Activated B cell treated with CpG ODN at 0.5 μM for 24 hours (primary cell): ENCODE measurements at regions of chr9 and their contacts with region 1.

Region 1: GRCh38 chr9:33139421-33140228 is 27.5 kb downstream of the B4GALT1 start:
- DNase-seq: peak; percentile 17
- ATAC-seq: no peak
- H3K4me3 Mint-ChIP-seq: peak overlapping the region; percentile 75
- H3K27ac Mint-ChIP-seq: peak overlapping the region; percentile 97
- H3K4me1 Mint-ChIP-seq: peaks cover 98% of the 10 kb centered on the region
- H3K27me3 Mint-ChIP-seq: no peaks in the 10 kb centered on the region
- CTCF ChIP-seq: no peak

Region 2: DNA sequence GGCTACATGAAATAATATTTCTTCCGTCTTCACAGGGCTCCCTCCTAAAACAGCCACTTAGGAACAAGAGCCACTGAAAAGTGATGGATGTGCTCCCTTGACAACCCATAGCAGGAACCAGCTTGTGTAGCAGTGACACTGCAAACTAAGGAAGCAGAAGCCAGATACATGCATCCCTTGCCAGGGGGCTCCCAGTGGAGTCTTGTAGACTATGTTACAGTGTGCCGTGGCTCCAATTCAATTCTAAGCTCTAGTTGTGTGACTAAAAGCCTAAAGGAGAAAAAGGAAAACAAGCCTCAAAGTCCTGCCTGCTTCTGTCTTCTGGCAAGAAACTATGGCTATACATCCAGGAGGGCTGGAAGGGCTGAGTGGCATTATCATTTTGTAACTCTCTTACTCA is 492.0 kb before region 1 on chr9:
- CTCF ChIA-PET with region 1: no interaction called
- POLR2A ChIA-PET with region 1: no interaction called
- intact Hi-C with region 1: no loop called
- DNase-seq: no peak
- ATAC-seq: no peak
- H3K4me3 Mint-ChIP-seq: no peak overlapping the region
- H3K27ac Mint-ChIP-seq: no peak overlapping the region
- H3K4me1 Mint-ChIP-seq: no peaks in the 10 kb centered on the region
- H3K27me3 Mint-ChIP-seq: peaks cover 20% of the 10 kb centered on the region
- CTCF ChIP-seq: no peak

Region 3: GRCh38 chr9:33116860-33117259 is 22.8 kb before region 1 on chr9:
- CTCF ChIA-PET with region 1: no interaction called
- POLR2A ChIA-PET with region 1: interaction called, 13 read pairs
- intact Hi-C with region 1: no loop called
- DNase-seq: no peak
- ATAC-seq: peak; percentile 86
- H3K4me3 Mint-ChIP-seq: peak overlapping the region; percentile 70
- H3K27ac Mint-ChIP-seq: peak overlapping the region; percentile 92
- H3K4me1 Mint-ChIP-seq: peaks cover 62% of the 10 kb centered on the region
- H3K27me3 Mint-ChIP-seq: no peaks in the 10 kb centered on the region
- CTCF ChIP-seq: no peak

Region 4: DNA sequence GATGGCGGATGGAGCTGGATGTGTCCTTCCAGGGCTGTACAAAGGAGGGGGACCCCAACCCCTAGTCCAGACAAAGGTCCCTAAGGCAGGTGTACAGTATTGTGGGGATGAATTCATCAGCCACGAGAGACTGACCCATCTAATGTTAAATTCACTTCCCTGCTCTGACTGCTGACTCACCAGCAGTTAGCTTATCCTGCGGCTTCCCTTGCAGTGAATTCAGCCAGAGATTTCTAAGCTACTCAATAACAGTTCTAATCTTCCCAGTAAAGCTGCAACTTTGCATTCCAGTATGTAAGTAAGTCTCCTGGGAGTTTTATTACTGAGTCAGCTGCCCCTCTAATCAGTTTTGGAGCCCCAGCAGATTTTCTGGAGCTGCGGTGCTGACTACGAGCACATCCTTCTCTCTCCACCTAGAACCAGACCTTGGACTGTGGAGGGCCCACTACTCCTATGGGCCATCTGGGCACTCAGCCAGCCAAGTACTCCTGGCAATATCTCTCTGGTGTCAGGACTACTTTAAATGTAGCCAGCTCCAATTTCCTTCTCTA is 11.5 kb after region 1 on chr9:
- CTCF ChIA-PET with region 1: interaction called, 7 read pairs
- POLR2A ChIA-PET with region 1: interaction called, 593 read pairs
- intact Hi-C with region 1: loop called (anchors 1 kb)
- DNase-seq: no peak
- ATAC-seq: peak; percentile 30
- H3K4me3 Mint-ChIP-seq: peak overlapping the region; percentile 33
- H3K27ac Mint-ChIP-seq: peak overlapping the region; percentile 84
- H3K4me1 Mint-ChIP-seq: peaks cover 91% of the 10 kb centered on the region
- H3K27me3 Mint-ChIP-seq: no peaks in the 10 kb centered on the region
- CTCF ChIP-seq: no peak

Region 5: DNA sequence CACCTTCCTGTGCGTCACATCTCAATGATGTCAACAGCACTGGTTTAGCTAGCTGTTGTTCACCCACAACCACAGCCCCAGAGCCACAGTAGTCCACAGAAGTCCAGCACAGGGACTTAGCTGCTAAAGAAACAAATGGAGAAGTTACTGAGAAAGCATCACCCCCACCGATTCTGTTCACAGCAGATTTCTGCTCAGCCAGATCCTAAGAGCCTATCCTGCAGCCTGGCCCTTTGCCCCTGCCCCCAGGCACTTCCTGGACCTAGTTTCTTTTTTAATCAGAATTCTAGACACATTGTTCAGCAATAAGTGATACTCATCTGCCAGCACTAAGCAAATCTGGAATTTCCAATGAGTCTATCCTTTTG is 20.1 kb after region 1 on chr9:
- CTCF ChIA-PET with region 1: interaction called, 7 read pairs
- POLR2A ChIA-PET with region 1: interaction called, 593 read pairs
- intact Hi-C with region 1: loop called (anchors 1 kb)
- DNase-seq: no peak
- ATAC-seq: peak; percentile 47
- H3K4me3 Mint-ChIP-seq: peak overlapping the region; percentile 97
- H3K27ac Mint-ChIP-seq: peak overlapping the region; percentile 95
- H3K4me1 Mint-ChIP-seq: peaks cover 99% of the 10 kb centered on the region
- H3K27me3 Mint-ChIP-seq: no peaks in the 10 kb centered on the region
- CTCF ChIP-seq: no peak

Region 6: GRCh38 chr9:33211695-33212393 is 72.2 kb after region 1 on chr9:
- CTCF ChIA-PET with region 1: no interaction called
- POLR2A ChIA-PET with region 1: no interaction called
- intact Hi-C with region 1: no loop called
- DNase-seq: no peak
- ATAC-seq: no peak
- H3K4me3 Mint-ChIP-seq: no peak overlapping the region
- H3K27ac Mint-ChIP-seq: no peak overlapping the region
- H3K4me1 Mint-ChIP-seq: no peaks in the 10 kb centered on the region
- H3K27me3 Mint-ChIP-seq: no peaks in the 10 kb centered on the region
- CTCF ChIP-seq: no peak

Region 7: GRCh38 chr9:33225319-33226149 is 85.9 kb after region 1 on chr9:
- CTCF ChIA-PET with region 1: interaction called, 13 read pairs
- POLR2A ChIA-PET with region 1: interaction called, 17 read pairs
- intact Hi-C with region 1: no loop called
- DNase-seq: no peak
- ATAC-seq: peak; percentile 33
- H3K4me3 Mint-ChIP-seq: no peak overlapping the region
- H3K27ac Mint-ChIP-seq: peak overlapping the region; percentile 4
- H3K4me1 Mint-ChIP-seq: peaks cover 51% of the 10 kb centered on the region
- H3K27me3 Mint-ChIP-seq: no peaks in the 10 kb centered on the region
- CTCF ChIP-seq: no peak